Mammary epithelial cell (primary cell): ENCODE measurements at regions of chr11 and their contacts with region 1.

Region 1: DNA sequence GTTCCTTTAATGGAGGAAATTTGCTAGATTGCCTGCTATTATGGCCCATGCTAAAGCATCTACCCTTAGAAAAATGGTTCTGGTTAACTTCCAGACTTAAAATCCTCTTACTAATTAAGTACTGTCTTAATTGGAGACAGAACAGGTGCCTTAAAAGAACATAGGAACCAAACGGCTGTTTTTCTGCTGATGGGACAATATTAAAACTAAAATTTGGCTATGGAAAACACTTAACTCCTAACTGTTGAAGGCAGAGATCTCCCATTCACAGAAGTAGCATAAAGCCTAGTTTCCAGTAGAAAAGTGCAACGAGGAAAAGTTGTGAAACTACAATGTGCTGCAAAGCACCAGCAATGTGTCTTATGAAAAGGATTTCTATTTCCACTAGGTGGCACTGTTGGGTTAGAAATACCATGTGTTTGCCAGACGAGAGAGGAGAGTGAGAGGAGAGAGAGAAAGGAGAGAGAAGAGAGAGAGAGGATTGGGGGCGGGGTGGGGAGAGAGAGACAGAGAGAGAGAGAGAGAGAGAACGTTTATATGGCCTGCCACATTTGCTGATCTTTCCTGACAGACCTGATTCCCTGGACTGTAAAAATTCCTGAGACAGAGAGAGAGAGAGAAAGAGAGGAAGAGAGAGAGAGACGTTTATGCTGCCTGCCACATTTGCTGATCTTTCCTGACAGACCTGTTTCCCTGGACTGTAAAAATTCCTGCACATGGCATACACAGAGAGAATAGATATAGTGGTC is 51.5 kb downstream of the FAM181B start:
- DNase-seq: peak; percentile 62
- H3K4me3 ChIP-seq: no peak overlapping the region
- H3K27ac ChIP-seq: no peak overlapping the region
- H3K4me1 ChIP-seq: no peaks in the 10 kb centered on the region
- H3K27me3 ChIP-seq: peaks cover 7% of the 10 kb centered on the region
- CTCF ChIP-seq: peak; percentile 44 to 66

Region 2: GRCh38 chr11:81644239-81644840 is 1037.8 kb before region 1 on chr11:
- CTCF ChIA-PET with region 1: no interaction called
- dilution Hi-C with region 1: no loop called
- in situ Hi-C with region 1: loop called in 1 of 2 experiments (anchors 25 kb)
- intact Hi-C with region 1: no loop called
- DNase-seq: peak; percentile 51
- H3K4me3 ChIP-seq: no peak overlapping the region
- H3K27ac ChIP-seq: no peak overlapping the region
- H3K4me1 ChIP-seq: no peaks in the 10 kb centered on the region
- H3K27me3 ChIP-seq: peaks cover 5% of the 10 kb centered on the region
- CTCF ChIP-seq: peak; percentile 63 to 65

Region 3: GRCh38 chr11:82092904-82093303 is 589.3 kb before region 1 on chr11:
- CTCF ChIA-PET with region 1: no interaction called
- dilution Hi-C with region 1: no loop called
- in situ Hi-C with region 1: no loop called
- intact Hi-C with region 1: loop called (anchors 5 kb)
- DNase-seq: no peak
- H3K4me3 ChIP-seq: no peak overlapping the region
- H3K27ac ChIP-seq: no peak overlapping the region
- H3K4me1 ChIP-seq: peaks cover 9% of the 10 kb centered on the region
- H3K27me3 ChIP-seq: no peaks in the 10 kb centered on the region
- CTCF ChIP-seq: no peak

Region 4: GRCh38 chr11:82315093-82315492 is 367.1 kb before region 1 on chr11:
- CTCF ChIA-PET with region 1: no interaction called
- dilution Hi-C with region 1: no loop called
- in situ Hi-C with region 1: loop called in 1 of 2 experiments (anchors 25 kb)
- intact Hi-C with region 1: no loop called
- DNase-seq: peak; percentile 5
- H3K4me3 ChIP-seq: no peak overlapping the region
- H3K27ac ChIP-seq: no peak overlapping the region
- H3K4me1 ChIP-seq: no peaks in the 10 kb centered on the region
- H3K27me3 ChIP-seq: no peaks in the 10 kb centered on the region
- CTCF ChIP-seq: peak; percentile 76 to 77

Region 5: DNA sequence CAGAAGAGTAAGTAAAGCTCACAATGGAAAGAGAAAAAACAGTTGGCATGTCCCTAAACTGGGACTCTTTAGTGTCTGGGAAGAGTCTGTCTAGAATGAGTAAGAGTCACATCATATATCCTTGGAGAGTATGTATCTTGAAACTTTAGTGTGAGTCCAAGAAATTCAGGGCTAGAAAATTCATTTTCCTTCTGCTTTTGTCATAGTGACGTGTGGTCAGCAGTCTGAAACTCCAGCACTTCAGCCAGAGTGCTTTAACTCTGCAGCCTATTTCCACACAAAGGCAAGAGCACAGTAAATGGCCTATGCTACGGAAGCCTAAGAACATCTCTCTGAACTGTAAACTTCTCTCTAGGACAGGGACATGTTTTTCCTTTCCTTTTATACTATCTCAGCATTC is 122.6 kb before region 1 on chr11:
- CTCF ChIA-PET with region 1: no interaction called
- dilution Hi-C with region 1: no loop called
- in situ Hi-C with region 1: no loop called
- intact Hi-C with region 1: no loop called
- DNase-seq: no peak
- H3K4me3 ChIP-seq: no peak overlapping the region
- H3K27ac ChIP-seq: no peak overlapping the region
- H3K4me1 ChIP-seq: no peaks in the 10 kb centered on the region
- H3K27me3 ChIP-seq: peaks cover 2% of the 10 kb centered on the region
- CTCF ChIP-seq: no peak

Region 6: GRCh38 chr11:82631722-82632630 is 50.2 kb before region 1 on chr11:
- CTCF ChIA-PET with region 1: no interaction called
- dilution Hi-C with region 1: no loop called
- in situ Hi-C with region 1: no loop called
- intact Hi-C with region 1: no loop called
- DNase-seq: peak; percentile 40
- H3K4me3 ChIP-seq: no peak overlapping the region
- H3K27ac ChIP-seq: no peak overlapping the region
- H3K4me1 ChIP-seq: no peaks in the 10 kb centered on the region
- H3K27me3 ChIP-seq: no peaks in the 10 kb centered on the region
- CTCF ChIP-seq: no peak